GM23248 (cell line): ENCODE measurements at regions of chr12 and their contacts with region 1.

Region 1: DNA sequence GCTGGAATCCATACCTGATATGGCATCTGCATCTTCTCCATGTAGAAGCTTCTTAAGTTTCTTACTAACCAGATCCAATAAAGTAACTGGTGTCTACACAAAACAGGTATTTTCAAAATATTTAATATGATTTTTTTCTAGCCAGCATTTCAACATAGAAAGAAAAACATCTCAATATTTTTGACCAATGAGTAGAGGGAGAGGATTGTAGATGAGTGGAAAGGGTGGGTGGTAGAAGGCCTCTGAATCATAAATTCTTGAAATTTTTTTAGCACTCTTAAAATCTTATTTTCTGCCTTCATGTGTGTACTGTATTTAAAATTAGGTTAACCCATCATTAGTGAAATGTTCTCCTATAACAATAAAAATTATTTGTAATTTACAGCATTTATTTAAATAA is 18.0 kb downstream of the DEPDC4 start:
- DNase-seq: peak; percentile 74
- H3K4me3 ChIP-seq: peak overlapping the region; percentile 39
- H3K27ac ChIP-seq: peak overlapping the region; percentile 57
- H3K4me1 ChIP-seq: peaks cover 17% of the 10 kb centered on the region
- H3K27me3 ChIP-seq: no peaks in the 10 kb centered on the region

Region 2: GRCh38 chr12:99476956-99477355 is 771.9 kb before region 1 on chr12:
- in situ Hi-C with region 1: no loop called
- DNase-seq: no peak
- H3K4me3 ChIP-seq: no peak overlapping the region
- H3K27ac ChIP-seq: no peak overlapping the region
- H3K4me1 ChIP-seq: no peaks in the 10 kb centered on the region
- H3K27me3 ChIP-seq: no peaks in the 10 kb centered on the region

Region 3: GRCh38 chr12:100329800-100330199 is 80.9 kb after region 1 on chr12:
- in situ Hi-C with region 1: no loop called
- DNase-seq: no peak
- H3K4me3 ChIP-seq: no peak overlapping the region
- H3K27ac ChIP-seq: no peak overlapping the region
- H3K4me1 ChIP-seq: peaks cover 8% of the 10 kb centered on the region; the same call in 1 of the 2 replicates
- H3K27me3 ChIP-seq: no peaks in the 10 kb centered on the region

Region 4: DNA sequence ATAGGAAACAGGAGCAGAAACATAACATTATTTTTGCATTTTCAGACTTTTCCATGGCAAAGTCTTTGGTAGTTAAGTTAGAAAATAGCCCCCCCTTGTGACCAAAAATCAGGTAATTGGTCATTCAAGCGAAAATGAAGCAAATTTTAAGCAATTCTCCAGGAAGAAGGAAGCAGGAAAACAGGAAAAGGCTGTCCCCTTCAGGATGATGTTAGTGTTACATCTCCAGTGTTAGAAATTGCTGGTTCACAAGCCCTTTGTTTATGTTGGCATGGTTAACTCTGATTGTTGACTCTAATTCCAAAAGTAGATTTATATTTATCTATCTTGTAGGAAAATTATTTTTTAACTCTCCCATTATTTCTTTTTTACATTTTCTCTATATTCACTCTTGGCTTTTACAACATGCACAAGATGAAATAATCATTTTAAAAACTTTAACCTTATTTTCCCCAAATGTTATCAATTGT is 305.8 kb after region 1 on chr12:
- in situ Hi-C with region 1: loop called (anchors 10 kb)
- DNase-seq: peak; percentile 90
- H3K4me3 ChIP-seq: no peak overlapping the region
- H3K27ac ChIP-seq: no peak overlapping the region
- H3K4me1 ChIP-seq: no peaks in the 10 kb centered on the region
- H3K27me3 ChIP-seq: no peaks in the 10 kb centered on the region